GM12878 (cell line): ENCODE measurements at regions of chr18 and their contacts with region 1.

Region 1: GRCh38 chr18:44725300-44726096 is 44.8 kb downstream of the SETBP1 start:
- DNase-seq: peak; percentile 71
- ATAC-seq: peak; percentile 73
- H3K4me3 ChIP-seq: peak overlapping the region; percentile 33; the same call in 1 of the 2 replicates
- H3K27ac ChIP-seq: peak overlapping the region; percentile 35
- H3K4me1 ChIP-seq: peaks cover 73% of the 10 kb centered on the region
- H3K27me3 ChIP-seq: no peaks in the 10 kb centered on the region
- CTCF ChIP-seq: no peak
- EP300 ChIP-seq: peak; percentile 50 to 89; a peak in 3 of 4 replicates
- POLR2A ChIP-seq: no peak
- RAD21 ChIP-seq: peak; percentile 30; the same call in 1 of the 2 replicates

Region 2: DNA sequence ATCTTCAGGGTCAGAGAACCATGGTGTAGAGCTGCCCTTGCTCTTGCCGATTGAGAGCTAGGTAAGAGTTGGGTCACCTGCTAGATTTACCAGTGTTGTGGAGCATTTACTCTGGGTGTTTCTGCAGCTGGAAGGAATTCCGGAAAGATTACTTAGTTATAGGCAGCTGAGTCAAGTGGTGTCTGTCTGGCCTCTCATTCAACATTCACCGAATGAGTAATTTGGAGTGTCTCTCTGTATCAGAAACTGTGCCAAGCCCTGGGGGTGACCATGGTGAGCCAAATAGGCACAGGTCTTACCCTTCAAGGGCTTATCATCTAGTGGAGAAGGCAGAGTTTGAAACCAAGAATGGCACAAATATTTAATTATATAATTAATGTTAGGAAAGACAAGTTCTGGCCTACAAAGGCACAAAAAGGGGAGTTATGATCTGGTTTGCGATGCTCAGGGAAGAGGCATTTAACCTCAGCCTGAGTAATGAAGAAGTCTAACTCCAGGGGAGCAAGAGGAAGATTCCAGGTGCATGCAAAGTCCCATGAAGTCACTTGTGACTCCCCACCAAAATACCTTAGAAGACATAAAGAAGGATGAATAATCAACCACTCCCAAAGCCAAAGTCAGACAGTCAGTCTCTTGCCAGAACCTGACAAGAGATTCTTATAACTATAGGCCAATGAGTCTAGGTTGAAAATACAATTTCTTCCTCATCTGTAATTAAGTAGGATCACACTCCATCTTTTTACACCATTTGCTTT is 32.3 kb before region 1 on chr18:
- CTCF ChIA-PET with region 1: interaction called, 4 read pairs
- POLR2A ChIA-PET with region 1: interaction called, 10 read pairs
- RAD21 ChIA-PET with region 1: interaction called, 3 read pairs
- SMC1A ChIA-PET with region 1: interaction called, 216 read pairs
- in situ Hi-C with region 1: no loop called
- intact Hi-C with region 1: no loop called
- DNase-seq: no peak
- ATAC-seq: peak; percentile 58
- H3K4me3 ChIP-seq: no peak overlapping the region
- H3K27ac ChIP-seq: no peak overlapping the region
- H3K4me1 ChIP-seq: peaks cover 2% of the 10 kb centered on the region; the same call in 1 of the 2 replicates
- H3K27me3 ChIP-seq: no peaks in the 10 kb centered on the region
- CTCF ChIP-seq: no peak
- EP300 ChIP-seq: no peak
- POLR2A ChIP-seq: no peak
- RAD21 ChIP-seq: no peak

Region 3: DNA sequence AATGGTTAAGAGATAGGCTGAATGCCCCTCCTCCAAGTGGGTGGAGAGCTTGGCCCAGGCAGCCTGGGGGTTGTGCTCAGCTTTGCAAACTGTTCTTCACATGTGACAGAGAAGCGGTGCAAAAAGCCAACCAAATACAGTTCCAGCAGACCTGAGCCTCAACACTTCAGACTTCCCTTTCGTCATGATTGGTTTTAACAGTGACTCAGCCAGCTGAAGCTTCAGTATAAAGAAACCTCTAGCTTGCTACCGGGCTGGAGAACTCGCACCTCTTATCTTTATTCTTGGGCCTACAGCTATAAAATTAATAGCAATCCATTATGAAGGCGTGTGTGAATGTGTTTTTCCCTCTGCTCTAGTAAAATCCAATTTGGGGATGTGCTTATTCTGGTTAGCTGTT is 24.8 kb before region 1 on chr18:
- CTCF ChIA-PET with region 1: interaction called, 4 read pairs
- POLR2A ChIA-PET with region 1: interaction called, 4 read pairs
- RAD21 ChIA-PET with region 1: interaction called, 7 read pairs
- SMC1A ChIA-PET with region 1: interaction called, 216 read pairs
- in situ Hi-C with region 1: no loop called
- intact Hi-C with region 1: no loop called
- DNase-seq: no peak
- ATAC-seq: peak; percentile 84
- H3K4me3 ChIP-seq: no peak overlapping the region
- H3K27ac ChIP-seq: no peak overlapping the region
- H3K4me1 ChIP-seq: peaks cover 2% of the 10 kb centered on the region
- H3K27me3 ChIP-seq: no peaks in the 10 kb centered on the region
- CTCF ChIP-seq: no peak
- EP300 ChIP-seq: no peak
- POLR2A ChIP-seq: no peak
- RAD21 ChIP-seq: no peak

Region 4: GRCh38 chr18:44709307-44710126 is 16.0 kb before region 1 on chr18:
- CTCF ChIA-PET with region 1: interaction called, 4 read pairs
- POLR2A ChIA-PET with region 1: interaction called, 5 read pairs
- RAD21 ChIA-PET with region 1: interaction called, 11 read pairs
- SMC1A ChIA-PET with region 1: interaction called, 216 read pairs
- in situ Hi-C with region 1: no loop called
- intact Hi-C with region 1: no loop called
- DNase-seq: peak; percentile 71
- ATAC-seq: peak; percentile 91
- H3K4me3 ChIP-seq: no peak overlapping the region
- H3K27ac ChIP-seq: peak overlapping the region; percentile 43
- H3K4me1 ChIP-seq: peaks cover 31% of the 10 kb centered on the region
- H3K27me3 ChIP-seq: no peaks in the 10 kb centered on the region
- CTCF ChIP-seq: no peak
- EP300 ChIP-seq: peak; percentile 64 to 87
- POLR2A ChIP-seq: no peak
- RAD21 ChIP-seq: 0 out of 2 replicates have a peak, but pooled peaks have one; percentile 20

Region 5: GRCh38 chr18:44786688-44787087 is 61.2 kb after region 1 on chr18:
- CTCF ChIA-PET with region 1: interaction called, 3 read pairs
- POLR2A ChIA-PET with region 1: interaction called, 3 read pairs
- RAD21 ChIA-PET with region 1: interaction called, 10 read pairs
- SMC1A ChIA-PET with region 1: interaction called, 3 read pairs
- in situ Hi-C with region 1: no loop called
- intact Hi-C with region 1: no loop called
- DNase-seq: no peak
- ATAC-seq: peak; percentile 85
- H3K4me3 ChIP-seq: peak overlapping the region; percentile 41; the same call in 1 of the 2 replicates
- H3K27ac ChIP-seq: peak overlapping the region; percentile 64
- H3K4me1 ChIP-seq: peaks cover 20% of the 10 kb centered on the region
- H3K27me3 ChIP-seq: no peaks in the 10 kb centered on the region
- CTCF ChIP-seq: no peak
- EP300 ChIP-seq: no peak
- POLR2A ChIP-seq: no peak
- RAD21 ChIP-seq: no peak

Region 6: DNA sequence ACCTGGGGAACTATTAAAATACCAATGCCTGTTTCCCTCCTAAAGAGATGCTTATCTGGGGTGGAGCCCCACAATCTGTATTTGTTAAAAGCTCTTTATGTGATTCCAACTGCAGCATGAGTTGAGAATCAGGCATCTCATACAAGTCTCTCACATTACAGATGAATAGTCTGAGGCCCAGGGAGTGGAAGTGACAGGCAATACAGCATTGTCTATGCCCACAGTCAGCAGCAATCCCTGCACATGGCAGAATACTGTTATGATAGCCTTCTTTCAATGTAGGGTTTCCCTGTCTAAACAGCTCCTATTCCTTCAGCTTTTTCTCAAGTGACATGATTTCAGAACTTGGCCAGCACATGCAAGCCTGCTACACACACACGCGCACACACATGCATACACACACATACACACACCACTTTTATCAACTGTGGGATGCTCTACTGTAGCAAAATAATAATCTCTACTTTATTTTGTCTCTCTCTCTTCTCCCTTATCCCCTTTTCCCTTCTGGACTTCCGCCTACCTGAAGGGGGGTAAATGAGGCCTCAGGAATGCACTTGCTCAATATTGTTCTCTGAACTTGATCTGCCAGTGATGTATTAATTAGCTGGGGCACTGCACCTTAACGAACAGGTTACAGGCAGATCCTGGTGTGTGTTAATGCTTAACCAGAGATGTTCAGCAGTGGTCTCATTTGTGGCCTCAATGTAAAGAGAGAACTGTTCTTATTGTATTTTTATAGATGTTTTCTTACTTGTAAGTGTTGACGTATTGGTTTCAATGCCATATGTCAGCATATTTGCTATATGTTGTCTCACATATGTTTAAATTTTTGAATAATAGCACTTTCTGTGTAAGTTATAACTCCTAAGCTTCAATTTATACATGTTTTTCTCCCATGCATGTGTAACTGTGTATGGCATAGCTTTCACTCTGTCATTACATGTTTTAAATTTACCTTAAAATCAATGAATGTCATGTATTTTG is 71.2 kb after region 1 on chr18:
- CTCF ChIA-PET with region 1: interaction called, 6 read pairs
- POLR2A ChIA-PET with region 1: interaction called, 7 read pairs
- RAD21 ChIA-PET with region 1: interaction called, 10 read pairs
- SMC1A ChIA-PET with region 1: interaction called, 14 read pairs
- in situ Hi-C with region 1: no loop called
- intact Hi-C with region 1: loop called (anchors 2 kb)
- DNase-seq: no peak
- ATAC-seq: peak; percentile 70
- H3K4me3 ChIP-seq: no peak overlapping the region
- H3K27ac ChIP-seq: no peak overlapping the region
- H3K4me1 ChIP-seq: peaks cover 24% of the 10 kb centered on the region
- H3K27me3 ChIP-seq: no peaks in the 10 kb centered on the region
- CTCF ChIP-seq: no peak
- EP300 ChIP-seq: no peak
- POLR2A ChIP-seq: no peak
- RAD21 ChIP-seq: no peak

Region 7: DNA sequence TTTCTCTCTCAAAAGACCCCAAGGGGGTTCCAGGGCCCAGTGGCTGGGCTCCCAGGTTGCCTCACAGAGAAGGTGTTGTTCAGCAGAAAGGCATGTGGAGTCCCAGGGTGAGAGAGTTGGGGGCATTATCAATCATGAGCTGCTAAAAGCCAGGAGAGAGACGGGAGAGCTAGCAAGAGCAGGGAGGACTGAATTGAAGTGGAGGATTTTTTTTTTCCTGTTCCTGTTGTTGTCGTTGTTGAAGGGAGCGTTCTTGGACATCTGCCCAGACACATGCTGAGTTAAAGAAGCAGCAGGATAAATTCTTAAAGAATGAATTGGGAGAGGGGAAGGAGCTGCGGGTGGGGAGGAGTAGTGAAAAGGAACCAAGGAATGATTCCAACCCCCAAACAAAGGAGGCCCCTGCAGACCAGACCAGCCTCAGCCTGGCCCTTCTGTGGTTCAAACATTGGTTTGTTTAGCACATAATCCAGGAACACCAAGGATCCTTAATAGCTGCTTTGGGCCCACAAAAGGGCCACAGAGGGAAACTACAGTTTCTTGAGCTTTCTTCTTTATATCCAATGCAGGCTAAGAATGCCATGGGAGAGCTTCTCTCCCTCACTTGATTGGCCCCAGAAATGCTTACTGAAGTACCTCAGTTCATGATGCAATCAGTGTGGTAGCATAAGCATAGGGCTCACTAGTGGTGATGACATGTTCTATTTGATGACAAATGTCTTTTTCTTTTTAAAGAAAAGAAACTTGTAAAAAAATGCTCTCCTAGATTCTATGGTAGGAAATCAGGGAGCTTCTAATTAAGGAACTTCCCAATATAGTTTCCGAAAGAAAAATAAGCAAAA is 101.1 kb after region 1 on chr18:
- CTCF ChIA-PET with region 1: interaction called, 3 read pairs
- POLR2A ChIA-PET with region 1: no interaction called
- RAD21 ChIA-PET with region 1: interaction called, 4 read pairs
- SMC1A ChIA-PET with region 1: interaction called, 14 read pairs
- in situ Hi-C with region 1: no loop called
- intact Hi-C with region 1: no loop called
- DNase-seq: no peak
- ATAC-seq: no peak
- H3K4me3 ChIP-seq: no peak overlapping the region
- H3K27ac ChIP-seq: no peak overlapping the region
- H3K4me1 ChIP-seq: no peaks in the 10 kb centered on the region
- H3K27me3 ChIP-seq: no peaks in the 10 kb centered on the region
- CTCF ChIP-seq: no peak
- EP300 ChIP-seq: no peak
- POLR2A ChIP-seq: no peak
- RAD21 ChIP-seq: no peak